ENCODE measurements at regions of chr11 and their contacts with region 1.

Region 1: GRCh38 chr11:117621226-117621625 is 175.8 kb downstream of the DSCAML1 start:
- DNase-seq: no peak
- ATAC-seq: no peak
- H3K4me3 Mint-ChIP-seq: no peak overlapping the region
- H3K27ac Mint-ChIP-seq: no peak overlapping the region
- H3K4me1 Mint-ChIP-seq: peaks cover 15% of the 10 kb centered on the region
- H3K27me3 Mint-ChIP-seq: no peaks in the 10 kb centered on the region
- CTCF ChIP-seq: peak; percentile 35

Region 2: DNA sequence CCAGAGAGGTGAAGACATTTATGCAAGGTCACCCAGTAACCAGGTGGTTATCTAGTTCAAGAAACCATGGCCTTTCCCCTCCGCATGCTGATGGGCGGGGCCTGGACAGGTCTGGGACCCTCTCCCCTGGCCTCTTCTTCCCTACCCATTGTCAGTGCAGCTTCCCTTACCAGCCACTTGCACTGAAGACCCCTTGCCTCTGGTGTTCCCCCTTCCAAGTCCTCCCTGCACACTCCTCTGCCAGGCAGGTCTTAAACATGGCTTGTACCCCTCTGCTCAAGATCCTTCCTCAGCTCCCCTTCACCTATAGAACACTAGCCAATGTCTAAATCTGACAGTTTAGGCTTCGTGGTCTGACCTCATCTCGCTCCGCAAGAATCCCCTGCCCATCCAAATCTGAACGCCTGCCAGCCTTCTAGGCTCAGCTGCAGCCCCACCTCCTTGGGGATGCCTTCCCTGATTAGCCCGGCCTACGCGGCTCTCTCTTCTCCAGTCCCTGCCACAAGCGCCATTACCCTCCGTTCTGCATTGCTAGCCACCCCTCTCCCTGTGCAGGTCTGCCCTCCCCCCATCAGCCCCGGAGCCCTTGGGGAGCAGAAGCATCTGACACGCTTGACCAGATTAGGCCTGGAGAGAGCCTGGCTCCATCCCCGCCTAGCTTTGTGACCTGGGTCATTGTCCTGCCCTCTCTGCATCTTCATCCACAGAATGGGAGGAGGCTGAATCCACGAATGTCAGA is 38.0 kb before region 1 on chr11:
- CTCF ChIA-PET with region 1: interaction called, 10 read pairs
- POLR2A ChIA-PET with region 1: no interaction called
- DNase-seq: no peak
- ATAC-seq: peak; percentile 83
- H3K4me3 Mint-ChIP-seq: no peak overlapping the region
- H3K27ac Mint-ChIP-seq: no peak overlapping the region
- H3K4me1 Mint-ChIP-seq: peaks cover 32% of the 10 kb centered on the region
- H3K27me3 Mint-ChIP-seq: peaks cover 6% of the 10 kb centered on the region; the same call in 1 of the 2 replicates
- CTCF ChIP-seq: no peak

Region 3: GRCh38 chr11:117597071-117597470 is 24.2 kb before region 1 on chr11:
- CTCF ChIA-PET with region 1: interaction called, 10 read pairs
- POLR2A ChIA-PET with region 1: no interaction called
- DNase-seq: peak; percentile 84
- ATAC-seq: peak; percentile 33; the same call in 1 of the 2 replicates
- H3K4me3 Mint-ChIP-seq: no peak overlapping the region
- H3K27ac Mint-ChIP-seq: no peak overlapping the region
- H3K4me1 Mint-ChIP-seq: peaks cover 29% of the 10 kb centered on the region
- H3K27me3 Mint-ChIP-seq: no peaks in the 10 kb centered on the region
- CTCF ChIP-seq: no peak

Region 4: DNA sequence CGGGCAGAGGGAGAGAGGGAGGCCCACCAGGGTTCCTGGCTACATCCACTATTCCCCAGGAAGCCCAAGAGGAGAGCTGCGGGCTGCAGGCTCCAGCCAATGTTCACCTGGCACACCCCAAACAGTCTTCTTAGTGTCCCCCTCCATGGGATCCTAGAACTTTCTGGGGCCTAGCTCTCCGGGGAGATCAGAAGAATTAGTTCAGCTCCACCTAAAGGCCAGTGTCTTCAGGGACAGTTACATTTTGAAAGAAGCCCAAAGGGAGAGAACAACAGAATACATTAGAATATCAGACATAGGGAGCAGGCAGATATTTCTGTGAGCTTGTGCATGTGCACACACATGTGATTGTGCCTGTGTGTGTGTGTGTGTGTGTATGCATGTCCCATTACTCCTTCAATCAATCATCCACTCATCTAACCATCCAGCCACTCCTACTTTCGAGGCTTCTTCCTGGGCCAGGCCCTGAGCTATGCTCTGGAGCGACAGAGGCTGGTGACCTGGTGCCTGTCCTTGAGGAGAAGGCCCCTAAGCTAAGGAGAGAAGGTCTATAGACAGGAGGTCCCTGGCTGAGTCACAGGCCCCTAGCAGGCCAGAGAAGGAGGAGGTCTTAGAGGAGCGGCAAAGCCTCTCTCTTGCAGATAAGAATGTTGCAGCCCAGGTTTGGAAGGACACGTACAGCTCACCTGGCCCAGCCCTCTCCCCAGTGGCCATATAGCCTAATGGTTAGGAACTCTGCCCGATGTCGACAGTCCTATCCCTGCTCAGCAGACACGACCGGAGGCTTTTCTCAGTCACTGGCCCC is 10.3 kb after region 1 on chr11:
- CTCF ChIA-PET with region 1: interaction called, 20 read pairs
- POLR2A ChIA-PET with region 1: no interaction called
- DNase-seq: no peak
- ATAC-seq: no peak
- H3K4me3 Mint-ChIP-seq: no peak overlapping the region
- H3K27ac Mint-ChIP-seq: 0 out of 2 replicates have a peak overlapping the region, but pooled peaks have one; percentile 6
- H3K4me1 Mint-ChIP-seq: peaks cover 16% of the 10 kb centered on the region
- H3K27me3 Mint-ChIP-seq: no peaks in the 10 kb centered on the region; the same call in none of the 2 replicates
- CTCF ChIP-seq: no peak

Region 5: GRCh38 chr11:117807482-117808327 is 186.5 kb after region 1 on chr11:
- CTCF ChIA-PET with region 1: interaction called, 19 read pairs
- POLR2A ChIA-PET with region 1: no interaction called
- DNase-seq: peak; percentile 85
- ATAC-seq: peak; percentile 69
- H3K4me3 Mint-ChIP-seq: no peak overlapping the region
- H3K27ac Mint-ChIP-seq: no peak overlapping the region
- H3K4me1 Mint-ChIP-seq: no peaks in the 10 kb centered on the region
- H3K27me3 Mint-ChIP-seq: peaks cover 8% of the 10 kb centered on the region
- CTCF ChIP-seq: peak; percentile 85